ENCODE measurements at regions of chr7 and their contacts with region 1.

Region 1: DNA sequence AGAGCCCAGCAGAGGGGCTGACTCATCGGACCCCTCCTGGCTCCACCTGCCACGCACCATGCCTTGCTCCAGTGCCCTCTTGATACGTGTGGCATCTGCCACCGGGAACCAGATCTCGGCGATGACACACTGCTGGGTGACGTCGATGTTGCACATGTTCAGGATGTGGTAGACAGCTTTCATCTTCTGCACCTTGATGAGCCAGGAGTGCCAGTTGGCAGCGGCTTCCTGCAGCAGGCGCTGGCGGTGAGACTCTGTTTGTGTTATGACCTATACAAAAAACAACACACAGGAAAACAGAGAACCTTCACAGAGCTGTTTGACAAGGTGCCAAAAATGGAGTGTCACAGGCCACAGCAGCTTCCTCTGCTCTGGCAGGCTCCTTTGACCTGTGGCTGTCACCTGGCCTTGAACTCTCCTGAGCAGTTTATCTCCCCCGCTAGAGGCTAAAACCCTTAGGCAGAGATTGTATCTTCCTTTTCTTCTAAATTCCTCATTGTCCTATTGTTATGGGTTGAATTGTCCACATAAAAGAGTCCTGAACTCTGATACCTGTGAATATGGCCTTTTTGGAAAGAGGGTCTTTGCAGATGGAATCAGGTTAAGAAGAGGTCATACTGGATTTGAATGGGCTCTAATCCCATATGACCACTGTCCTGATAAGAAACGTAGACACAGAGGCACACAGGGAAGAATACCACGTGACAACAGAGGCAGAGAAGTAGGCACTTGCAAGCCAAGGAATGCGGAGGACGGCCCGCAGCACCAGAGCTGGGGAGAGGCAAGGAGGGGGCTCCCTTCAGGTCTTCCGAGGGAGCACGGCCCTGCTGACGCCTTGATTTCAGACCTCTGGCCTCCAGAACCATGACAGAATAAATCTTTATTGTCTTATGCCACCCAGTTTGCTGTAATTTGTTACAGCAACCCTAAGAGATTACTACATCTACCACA is 45.0 kb upstream of the TMEM213 start:
- DNase-seq: peak; percentile 97 to 100
- H3K4me3 ChIP-seq: no peak overlapping the region
- H3K27ac ChIP-seq: peak overlapping the region; percentile 95
- H3K4me1 ChIP-seq: peaks cover 73% of the 10 kb centered on the region
- H3K27me3 ChIP-seq: no peaks in the 10 kb centered on the region
- CTCF ChIP-seq: no peak

Region 2: DNA sequence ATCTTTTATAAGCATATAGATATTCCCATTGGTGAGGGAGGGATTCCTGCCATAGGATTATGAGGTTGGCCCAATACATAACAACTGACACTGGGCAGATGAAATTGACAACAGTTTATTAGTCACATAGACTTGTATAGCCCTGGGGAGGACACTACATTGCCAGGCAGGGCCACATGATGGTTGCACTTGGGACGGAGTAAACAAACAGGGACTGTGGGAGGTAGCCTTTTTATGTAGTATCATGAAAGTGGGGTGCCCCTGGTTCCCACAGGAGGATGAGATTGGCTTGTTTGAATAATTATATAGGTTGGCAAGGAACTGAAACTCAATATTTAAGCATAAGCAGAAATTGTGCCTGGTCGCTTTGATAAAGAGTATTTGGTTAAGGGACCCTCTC is 269.3 kb before region 1 on chr7:
- CTCF ChIA-PET with region 1: no interaction called
- POLR2A ChIA-PET with region 1: no interaction called
- intact Hi-C with region 1: no loop called
- DNase-seq: no peak
- H3K4me3 ChIP-seq: no peak overlapping the region
- H3K27ac ChIP-seq: no peak overlapping the region
- H3K4me1 ChIP-seq: peaks cover 3% of the 10 kb centered on the region
- H3K27me3 ChIP-seq: no peaks in the 10 kb centered on the region
- CTCF ChIP-seq: no peak

Region 3: DNA sequence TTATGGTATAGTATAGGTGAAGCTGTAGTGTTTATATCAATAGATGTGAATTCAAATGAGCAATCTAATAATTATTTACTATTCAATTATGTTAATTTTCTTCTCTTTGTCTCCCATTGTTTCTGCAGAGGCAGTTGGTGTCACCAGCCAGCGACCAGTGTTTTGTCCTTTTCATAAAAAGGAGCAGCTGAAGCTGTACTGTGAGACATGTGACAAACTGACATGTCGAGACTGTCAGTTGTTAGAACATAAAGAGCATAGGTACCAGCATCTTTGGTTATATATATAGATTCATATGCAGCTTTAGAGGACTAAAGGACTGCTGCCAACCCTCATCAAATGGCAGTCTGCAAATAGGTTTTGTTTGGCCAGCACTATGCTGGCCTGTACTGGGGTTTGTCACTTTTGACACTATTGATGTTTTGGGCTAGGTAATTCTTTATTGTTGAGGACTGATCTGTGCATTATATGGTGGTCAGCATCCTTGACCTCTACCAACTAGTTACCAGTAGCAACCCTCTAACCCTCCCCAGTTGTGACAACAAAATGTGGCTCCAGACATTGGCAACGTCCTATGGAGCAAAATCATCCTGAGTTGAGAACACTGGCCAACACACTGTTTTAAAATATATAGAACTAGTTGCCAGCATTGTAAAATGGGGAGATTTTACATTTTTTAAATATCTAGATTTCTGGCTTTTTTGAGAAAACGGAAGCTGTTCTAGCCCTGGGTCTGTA is 233.6 kb before region 1 on chr7:
- CTCF ChIA-PET with region 1: no interaction called
- POLR2A ChIA-PET with region 1: no interaction called
- intact Hi-C with region 1: no loop called
- DNase-seq: no peak
- H3K4me3 ChIP-seq: no peak overlapping the region
- H3K27ac ChIP-seq: no peak overlapping the region
- H3K4me1 ChIP-seq: no peaks in the 10 kb centered on the region
- H3K27me3 ChIP-seq: no peaks in the 10 kb centered on the region
- CTCF ChIP-seq: no peak

Region 4: GRCh38 chr7:138595454-138595853 is 157.4 kb before region 1 on chr7:
- CTCF ChIA-PET with region 1: no interaction called
- POLR2A ChIA-PET with region 1: no interaction called
- intact Hi-C with region 1: no loop called
- DNase-seq: no peak
- H3K4me3 ChIP-seq: no peak overlapping the region
- H3K27ac ChIP-seq: no peak overlapping the region
- H3K4me1 ChIP-seq: no peaks in the 10 kb centered on the region
- H3K27me3 ChIP-seq: no peaks in the 10 kb centered on the region
- CTCF ChIP-seq: no peak

Region 5: DNA sequence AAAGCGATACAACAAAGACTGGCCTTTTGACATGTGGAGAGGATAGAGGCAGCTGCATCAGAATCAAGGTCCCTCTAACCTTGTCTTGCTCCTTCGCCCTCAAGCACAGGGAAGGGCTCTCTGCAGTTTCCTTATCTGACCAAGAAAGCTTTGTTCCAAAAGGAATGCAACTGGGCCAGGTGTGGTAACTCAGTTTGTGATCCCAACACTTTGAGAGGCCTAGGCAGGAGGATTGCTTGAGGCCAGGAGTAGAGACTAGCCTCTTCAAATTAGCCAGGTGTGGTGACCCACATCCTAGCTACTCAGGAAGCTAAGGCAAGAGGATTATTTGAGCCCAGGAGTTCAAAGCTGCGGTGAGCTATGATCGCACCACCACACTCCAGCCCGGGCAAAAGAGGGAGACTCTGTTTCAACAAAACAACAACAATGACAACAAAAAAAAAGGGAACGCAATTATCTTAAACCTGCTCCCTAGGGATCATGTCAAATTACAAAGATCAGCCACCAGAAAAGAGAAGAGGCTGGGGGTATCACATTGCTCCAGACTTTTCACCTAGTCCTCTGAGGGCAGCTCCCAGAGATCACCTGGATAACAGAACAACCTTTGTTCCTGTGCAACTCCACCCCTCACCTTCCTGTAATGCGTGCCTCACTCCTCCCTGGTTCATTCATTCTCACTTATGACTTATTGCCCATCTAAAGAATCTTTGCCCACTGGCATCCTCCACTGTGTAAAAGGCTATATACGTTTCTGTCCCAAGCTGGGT is 83.7 kb before region 1 on chr7:
- CTCF ChIA-PET with region 1: no interaction called
- POLR2A ChIA-PET with region 1: no interaction called
- intact Hi-C with region 1: no loop called
- DNase-seq: peak in 1 of 2 experiments; percentile 60
- H3K4me3 ChIP-seq: no peak overlapping the region
- H3K27ac ChIP-seq: peak overlapping the region; percentile 28; the same call in 1 of the 2 replicates
- H3K4me1 ChIP-seq: peaks cover 24% of the 10 kb centered on the region
- H3K27me3 ChIP-seq: no peaks in the 10 kb centered on the region
- CTCF ChIP-seq: no peak

Region 6: DNA sequence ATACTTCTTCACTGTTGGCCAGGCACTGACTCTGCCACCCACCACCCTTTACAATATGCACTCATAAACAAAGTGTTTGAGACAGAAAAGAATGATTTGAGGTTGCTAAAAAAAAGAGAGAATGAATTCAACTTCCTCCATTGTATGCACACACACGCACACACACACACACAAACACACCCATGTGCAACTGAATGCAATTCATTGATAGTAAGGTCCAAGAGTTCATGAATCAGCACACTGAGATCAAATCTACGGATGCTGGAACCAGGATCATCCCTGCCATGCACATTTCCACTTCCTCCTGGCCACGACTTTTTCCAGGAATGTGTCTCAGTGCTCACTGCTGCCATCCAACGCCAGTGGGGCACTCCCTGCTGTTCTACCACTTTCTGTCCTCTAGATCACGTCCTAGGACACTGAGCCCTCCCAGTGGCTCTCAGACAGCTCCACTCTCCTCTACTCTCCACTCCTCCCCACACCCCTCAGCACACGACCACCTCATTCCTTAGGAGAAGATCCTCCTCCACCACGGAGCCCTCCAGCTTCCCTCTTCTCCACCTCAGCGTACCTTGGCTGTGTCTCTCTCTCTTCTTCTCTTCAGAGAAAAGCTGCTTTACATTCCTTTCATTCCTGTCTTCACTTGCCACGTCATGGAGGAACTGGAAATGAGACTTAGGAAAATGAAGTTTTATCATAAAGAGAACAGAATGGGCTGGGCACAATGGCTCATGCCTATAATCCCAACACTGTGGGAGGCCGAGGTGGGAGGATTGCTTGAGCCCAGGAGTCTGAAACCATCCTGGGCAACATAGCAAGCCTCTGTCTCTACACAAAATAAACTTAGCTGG is 33.0 kb after region 1 on chr7:
- CTCF ChIA-PET with region 1: no interaction called
- POLR2A ChIA-PET with region 1: interaction called, 3 read pairs
- intact Hi-C with region 1: loop called (anchors 1 kb)
- DNase-seq: peak; percentile 56 to 60
- H3K4me3 ChIP-seq: no peak overlapping the region
- H3K27ac ChIP-seq: no peak overlapping the region
- H3K4me1 ChIP-seq: no peaks in the 10 kb centered on the region
- H3K27me3 ChIP-seq: no peaks in the 10 kb centered on the region
- CTCF ChIP-seq: no peak

Region 7: GRCh38 chr7:138848056-138848980 is 95.5 kb after region 1 on chr7:
- CTCF ChIA-PET with region 1: no interaction called
- POLR2A ChIA-PET with region 1: no interaction called
- intact Hi-C with region 1: loop called (anchors 2 kb)
- DNase-seq: peak in 1 of 2 experiments; percentile 59
- H3K4me3 ChIP-seq: no peak overlapping the region
- H3K27ac ChIP-seq: peak overlapping the region; percentile 92
- H3K4me1 ChIP-seq: peaks cover 31% of the 10 kb centered on the region
- H3K27me3 ChIP-seq: no peaks in the 10 kb centered on the region
- CTCF ChIP-seq: no peak

Region 8: DNA sequence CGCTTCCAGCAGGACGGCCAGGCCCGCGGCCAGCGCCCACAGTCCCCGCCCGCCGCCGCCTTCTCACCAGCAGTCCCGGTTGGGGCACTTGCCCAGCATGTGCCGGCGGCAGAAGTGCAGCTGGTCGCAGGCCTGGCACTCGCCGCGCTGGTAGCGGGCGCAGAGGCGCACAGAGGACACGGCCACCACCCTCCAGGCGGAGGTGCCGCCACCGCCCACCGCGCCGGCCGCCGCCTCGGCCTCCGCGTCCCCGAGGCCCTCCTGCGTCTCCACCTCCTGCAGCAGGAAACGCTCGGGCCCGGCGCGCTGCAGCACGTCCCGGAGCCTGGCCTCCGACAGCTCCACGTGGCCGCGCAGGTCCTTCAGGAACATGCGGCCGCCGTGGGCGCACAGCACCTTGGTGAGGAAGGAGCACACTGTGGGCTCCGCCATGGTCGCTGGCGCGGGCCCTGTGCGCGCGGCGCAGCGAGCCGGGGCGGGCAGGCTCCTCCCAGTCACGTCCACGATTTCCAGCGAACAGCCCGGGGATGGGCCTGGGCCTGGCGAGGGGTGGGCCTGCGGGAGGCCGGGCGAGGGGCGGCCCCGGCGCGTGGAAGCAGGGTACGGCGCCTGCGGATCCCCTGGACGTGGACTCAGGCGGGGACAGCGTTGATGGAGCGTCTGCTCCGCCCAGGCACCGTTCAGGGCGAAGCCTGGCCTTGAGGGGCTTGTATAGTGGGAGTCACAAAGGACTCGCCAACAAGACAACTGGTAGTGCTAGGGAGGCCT is 282.9 kb after region 1 on chr7 and contains the start of gene ZC3HAV1L:
- CTCF ChIA-PET with region 1: no interaction called
- POLR2A ChIA-PET with region 1: no interaction called
- intact Hi-C with region 1: loop called (anchors 10 kb)
- DNase-seq: peak; percentile 47 to 83
- H3K4me3 ChIP-seq: peak within 1 kb of the TSS; percentile 95
- H3K27ac ChIP-seq: peak within 1 kb of the TSS; percentile 56
- H3K4me1 ChIP-seq: peaks cover 15% of the 10 kb centered on the region
- H3K27me3 ChIP-seq: no peaks in the 10 kb centered on the region
- CTCF ChIP-seq: no peak
- total RNA-seq, gene ZC3HAV1L: 34.2 and 34.8 TPM in 2 replicates

Measured in PC-9 (cell line).